ENCODE measurements at regions of chr2 and their contacts with region 1.

Region 1: DNA sequence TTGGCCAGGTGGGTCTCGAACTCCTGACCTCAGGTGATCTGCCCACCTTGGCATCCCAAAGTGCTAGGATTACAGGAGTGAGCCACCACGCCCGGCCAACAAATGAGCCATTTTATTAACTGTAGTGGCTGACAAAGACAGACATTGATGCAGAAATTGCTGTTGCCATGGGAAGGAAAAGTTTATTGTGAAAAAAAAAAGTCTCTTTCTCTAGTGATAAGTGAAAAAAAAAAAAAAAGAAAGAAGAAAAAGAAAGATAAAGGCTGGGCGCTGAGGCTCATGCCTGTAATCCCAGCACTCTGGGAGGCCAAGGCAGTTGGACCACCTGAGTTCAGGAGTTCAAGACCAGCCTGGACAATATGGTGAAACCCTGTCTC is 39.8 kb upstream of the RAB1A start:
- DNase-seq: no peak
- H3K4me3 Mint-ChIP-seq: no peak overlapping the region
- H3K27ac Mint-ChIP-seq: no peak overlapping the region
- H3K4me1 Mint-ChIP-seq: no peaks in the 10 kb centered on the region
- H3K27me3 Mint-ChIP-seq: no peaks in the 10 kb centered on the region

Region 2: GRCh38 chr2:65070172-65070830 is 99.4 kb before region 1 on chr2:
- CTCF ChIA-PET with region 1: interaction called, 59 read pairs
- POLR2A ChIA-PET with region 1: no interaction called
- intact Hi-C with region 1: no loop called
- DNase-seq: peak; percentile 41
- H3K4me3 Mint-ChIP-seq: no peak overlapping the region
- H3K27ac Mint-ChIP-seq: peak overlapping the region; percentile 81
- H3K4me1 Mint-ChIP-seq: peaks cover 44% of the 10 kb centered on the region
- H3K27me3 Mint-ChIP-seq: no peaks in the 10 kb centered on the region

Region 3: GRCh38 chr2:65129826-65130663 is 39.7 kb before region 1 on chr2 and contains the start of gene RAB1A:
- CTCF ChIA-PET with region 1: interaction called, 12 read pairs
- POLR2A ChIA-PET with region 1: interaction called, 3 read pairs
- intact Hi-C with region 1: no loop called
- DNase-seq: peak; percentile 100
- H3K4me3 Mint-ChIP-seq: peak within 1 kb of the TSS; percentile 96
- H3K27ac Mint-ChIP-seq: peak within 1 kb of the TSS; percentile 95
- H3K4me1 Mint-ChIP-seq: peaks cover 34% of the 10 kb centered on the region
- H3K27me3 Mint-ChIP-seq: no peaks in the 10 kb centered on the region
- total RNA-seq, gene RAB1A: 84.3 to 84.5 TPM

Measured in activated CD4-positive, alpha-beta memory T cell treated with anti-CD3 and anti-CD28 coated beads for 36 hours (primary cell).